CD4-positive, alpha-beta memory T cell (primary cell): ENCODE measurements at regions of chr19 and their contacts with region 1.

Region 1: DNA sequence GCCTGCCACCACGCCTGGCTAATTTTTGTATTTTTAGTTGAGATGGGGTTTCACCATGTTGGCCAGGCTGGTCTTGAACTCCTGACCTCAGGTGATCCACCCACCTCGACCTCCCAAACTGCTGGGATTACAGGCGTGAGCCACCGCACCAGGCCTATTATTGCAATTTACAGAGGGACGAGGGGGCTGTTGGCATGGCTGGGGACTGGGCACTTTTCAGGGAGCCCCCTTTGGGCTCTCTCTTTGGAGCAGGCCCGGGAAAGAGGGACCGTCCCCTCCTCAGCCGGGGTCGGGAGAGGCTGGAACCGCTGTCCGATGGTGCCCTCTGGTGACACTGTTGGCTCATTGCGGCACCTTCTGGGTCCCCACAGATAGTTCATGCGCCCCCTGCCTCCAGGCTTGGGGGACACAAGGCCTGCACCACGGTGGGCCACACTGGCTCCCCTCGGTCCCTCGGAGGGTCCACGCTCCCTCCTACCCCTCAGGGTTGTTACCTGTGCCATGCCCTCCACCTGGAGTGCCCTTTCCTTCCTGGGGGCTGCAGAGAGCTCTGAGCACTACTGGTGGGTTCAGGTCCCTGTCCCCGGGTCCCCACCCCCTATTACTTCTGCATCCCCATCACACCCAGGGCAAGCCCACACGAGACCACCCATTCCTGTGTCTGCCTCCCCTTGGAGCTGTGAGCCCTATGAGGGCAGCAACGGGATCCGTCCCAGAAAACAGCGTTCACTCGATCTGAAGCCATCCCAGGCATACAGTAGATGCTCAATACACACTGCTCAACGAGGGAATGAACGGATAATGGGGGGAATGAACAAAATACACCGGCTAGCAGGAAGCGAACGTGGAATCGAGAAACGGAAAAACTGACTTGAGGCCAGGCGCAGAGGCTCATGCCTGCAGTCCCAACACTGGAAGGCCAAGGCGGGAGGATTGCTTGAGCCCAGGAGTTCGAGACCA is 12.5 kb downstream of the FEM1A start:
- DNase-seq: peak; percentile 46 to 60 (median 52)
- H3K4me3 ChIP-seq: no peak overlapping the region
- H3K4me3 Mint-ChIP-seq: peak overlapping the region in 1 of 8 donors; percentile 52
- H3K27ac ChIP-seq: no peak overlapping the region
- H3K27ac Mint-ChIP-seq: peak overlapping the region in 1 of 7 donors; percentile 75
- H3K4me1 ChIP-seq: no peaks in the 10 kb centered on the region
- H3K4me1 Mint-ChIP-seq: peaks cover 0 to 1% (median 0%) of the 10 kb centered on the region in 4 donors
- H3K27me3 ChIP-seq: no peaks in the 10 kb centered on the region
- H3K27me3 Mint-ChIP-seq: no peaks in the 10 kb centered on the region

Region 2: DNA sequence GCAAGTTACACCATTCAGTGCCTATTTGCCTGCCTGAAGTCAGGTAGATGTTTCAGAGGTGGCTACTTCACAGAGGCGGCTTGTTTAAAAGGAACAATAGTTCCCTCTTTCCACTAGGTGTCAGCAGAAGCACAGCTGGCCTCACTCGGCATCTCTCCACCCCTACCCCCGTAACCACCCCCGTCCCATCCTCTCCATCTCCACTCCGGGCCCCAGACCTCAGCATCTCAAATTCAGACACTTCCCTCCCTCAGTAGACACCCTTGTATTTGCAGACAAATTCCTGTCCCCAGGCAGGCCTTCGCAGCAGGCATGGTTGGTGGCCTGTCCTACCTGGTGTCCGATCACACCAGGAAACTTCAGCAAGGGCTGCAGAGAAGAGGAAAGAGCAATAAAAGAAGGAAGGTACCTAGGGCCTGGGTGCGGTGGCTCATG is 71.3 kb before region 1 on chr19:
- CTCF ChIA-PET with region 1: interaction called, 9 read pairs
- POLR2A ChIA-PET with region 1: no interaction called
- intact Hi-C with region 1: loop called (anchors 1 kb)
- DNase-seq: peak; percentile 57 to 66 (median 61)
- H3K4me3 ChIP-seq: no peak overlapping the region
- H3K4me3 Mint-ChIP-seq: peak overlapping the region in 5 of 8 donors; percentile 1 to 34 (median 7)
- H3K27ac ChIP-seq: no peak overlapping the region
- H3K27ac Mint-ChIP-seq: peak overlapping the region in 3 of 7 donors; percentile 5 to 60 (median 52)
- H3K4me1 ChIP-seq: peaks cover 4% of the 10 kb centered on the region
- H3K4me1 Mint-ChIP-seq: peaks cover 6 to 12% (median 7%) of the 10 kb centered on the region in 4 donors
- H3K27me3 ChIP-seq: no peaks in the 10 kb centered on the region
- H3K27me3 Mint-ChIP-seq: peaks cover 2 to 10% of the 10 kb centered on the region in 2 donors